HCT116 (cell line): ENCODE measurements at regions of chr1 and their contacts with region 1.

Region 1: GRCh38 chr1:152459596-152460528 is 45.8 kb upstream of the CRNN start:
- DNase-seq: peak; percentile 64
- ATAC-seq: peak; percentile 80
- H3K4me3 ChIP-seq: no peak overlapping the region
- H3K27ac ChIP-seq: no peak overlapping the region
- H3K4me1 ChIP-seq: peaks cover 0 to 11% of the 10 kb centered on the region in 2 experiments; a peak in 2 of 4 replicates
- H3K27me3 ChIP-seq: no peaks in the 10 kb centered on the region
- CTCF ChIP-seq: peak; percentile 39 to 88 (median 88); a peak in 4 of 6 replicates
- POLR2A ChIP-seq: no peak
- RAD21 ChIP-seq: no peak; the same call in 1 of the 2 replicates

Region 2: DNA sequence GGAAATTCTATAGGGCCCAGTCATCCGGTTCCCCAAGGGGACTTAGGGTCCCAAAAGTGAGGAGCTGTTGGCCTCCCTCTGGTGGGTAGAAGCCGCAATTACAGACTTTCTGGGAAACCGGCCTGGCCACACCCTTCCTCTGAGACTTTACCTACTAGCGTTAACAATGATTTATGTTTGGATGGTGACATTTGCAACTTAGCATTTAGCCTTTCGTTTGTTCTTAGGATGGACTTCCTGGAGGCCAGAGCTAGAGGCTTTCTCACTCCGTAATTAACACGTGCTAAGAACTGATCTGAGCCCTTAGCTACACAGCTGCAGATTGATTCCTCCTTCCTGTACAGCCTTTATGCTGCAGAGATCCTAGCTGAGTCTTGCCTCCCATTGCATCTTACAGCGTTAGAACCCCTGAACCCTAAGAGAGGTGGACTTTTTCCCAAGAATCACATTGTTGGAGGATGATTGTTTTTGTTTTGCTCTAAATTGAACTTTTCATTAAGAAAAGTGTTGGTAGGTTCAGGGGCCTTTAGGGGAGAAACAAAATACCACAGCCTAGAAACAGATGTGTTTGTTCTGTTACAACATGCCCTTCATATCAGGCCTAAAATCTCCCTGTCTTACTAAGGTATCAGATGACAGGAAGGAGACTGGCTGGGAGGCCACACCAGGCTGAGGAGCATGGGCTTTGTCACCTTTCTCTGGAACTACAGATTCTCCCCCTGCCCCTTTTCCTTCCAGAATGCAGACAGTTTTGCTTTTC is 425.0 kb before region 1 on chr1:
- CTCF ChIA-PET with region 1: interaction called, 17 read pairs
- POLR2A ChIA-PET with region 1: no interaction called
- RAD21 ChIA-PET with region 1: no interaction called
- intact Hi-C with region 1: no loop called
- DNase-seq: peak; percentile 79
- ATAC-seq: peak; percentile 62
- H3K4me3 ChIP-seq: peak overlapping the region; percentile 64 to 70
- H3K27ac ChIP-seq: peak overlapping the region; percentile 79
- H3K4me1 ChIP-seq: peaks cover 19 to 28% of the 10 kb centered on the region in 2 experiments
- H3K27me3 ChIP-seq: no peaks in the 10 kb centered on the region
- CTCF ChIP-seq: peak; percentile 52 to 79 (median 78); a peak in 5 of 6 replicates
- POLR2A ChIP-seq: no peak
- RAD21 ChIP-seq: peak; percentile 53

Region 3: DNA sequence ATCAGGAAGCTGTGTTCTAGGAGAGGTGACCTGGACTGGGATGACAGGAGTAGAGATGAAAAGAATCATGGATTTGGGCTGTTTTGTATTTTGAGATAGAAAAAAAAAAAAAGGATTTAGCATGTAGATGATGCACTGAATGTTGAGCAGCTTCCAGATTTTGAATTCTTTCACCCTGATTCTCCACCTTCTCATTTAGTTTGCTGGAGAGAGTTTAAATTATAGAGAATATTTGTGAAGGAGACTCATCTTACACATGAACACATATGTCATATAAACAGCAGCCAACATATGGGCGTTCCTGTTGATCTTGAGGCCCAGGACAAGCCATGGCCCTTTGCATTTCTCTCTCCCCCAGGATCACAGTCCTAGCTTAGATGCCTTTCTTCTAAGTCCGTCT is 308.2 kb before region 1 on chr1:
- CTCF ChIA-PET with region 1: interaction called, 11 read pairs
- POLR2A ChIA-PET with region 1: no interaction called
- RAD21 ChIA-PET with region 1: no interaction called
- intact Hi-C with region 1: no loop called
- DNase-seq: no peak
- ATAC-seq: no peak
- H3K4me3 ChIP-seq: no peak overlapping the region
- H3K27ac ChIP-seq: no peak overlapping the region
- H3K4me1 ChIP-seq: no peaks in the 10 kb centered on the region
- H3K27me3 ChIP-seq: no peaks in the 10 kb centered on the region
- CTCF ChIP-seq: no peak
- POLR2A ChIP-seq: no peak
- RAD21 ChIP-seq: no peak

Region 4: GRCh38 chr1:152347116-152347728 is 112.6 kb before region 1 on chr1:
- CTCF ChIA-PET with region 1: interaction called, 39 read pairs
- POLR2A ChIA-PET with region 1: interaction called, 4 read pairs
- RAD21 ChIA-PET with region 1: interaction called in 1 of 2 experiments, 5 read pairs
- intact Hi-C with region 1: no loop called
- DNase-seq: peak; percentile 61
- ATAC-seq: peak; percentile 81
- H3K4me3 ChIP-seq: no peak overlapping the region
- H3K27ac ChIP-seq: no peak overlapping the region
- H3K4me1 ChIP-seq: no peaks in the 10 kb centered on the region
- H3K27me3 ChIP-seq: peaks cover 23% of the 10 kb centered on the region
- CTCF ChIP-seq: peak; percentile 54 to 90 (median 81); a peak in 5 of 6 replicates
- POLR2A ChIP-seq: no peak
- RAD21 ChIP-seq: peak; percentile 57

Region 5: GRCh38 chr1:152473887-152474537 is 14.2 kb after region 1 on chr1:
- CTCF ChIA-PET with region 1: interaction called, 11 read pairs
- POLR2A ChIA-PET with region 1: no interaction called
- RAD21 ChIA-PET with region 1: no interaction called
- intact Hi-C with region 1: no loop called
- DNase-seq: no peak
- ATAC-seq: no peak
- H3K4me3 ChIP-seq: no peak overlapping the region
- H3K27ac ChIP-seq: no peak overlapping the region
- H3K4me1 ChIP-seq: no peaks in the 10 kb centered on the region
- H3K27me3 ChIP-seq: no peaks in the 10 kb centered on the region
- CTCF ChIP-seq: no peak
- POLR2A ChIP-seq: no peak
- RAD21 ChIP-seq: no peak

Region 6: GRCh38 chr1:152533327-152533938 is 73.6 kb after region 1 on chr1:
- CTCF ChIA-PET with region 1: interaction called, 6 read pairs
- POLR2A ChIA-PET with region 1: no interaction called
- RAD21 ChIA-PET with region 1: no interaction called
- intact Hi-C with region 1: loop called (anchors 2 kb)
- DNase-seq: peak; percentile 56
- ATAC-seq: peak; percentile 87
- H3K4me3 ChIP-seq: no peak overlapping the region
- H3K27ac ChIP-seq: no peak overlapping the region
- H3K4me1 ChIP-seq: no peaks in the 10 kb centered on the region
- H3K27me3 ChIP-seq: no peaks in the 10 kb centered on the region
- CTCF ChIP-seq: peak; percentile 86 to 91 (median 88)
- POLR2A ChIP-seq: no peak
- RAD21 ChIP-seq: peak; percentile 84

Region 7: GRCh38 chr1:152735648-152736047 is 275.8 kb after region 1 on chr1:
- CTCF ChIA-PET with region 1: no interaction called
- POLR2A ChIA-PET with region 1: no interaction called
- RAD21 ChIA-PET with region 1: no interaction called
- intact Hi-C with region 1: no loop called
- DNase-seq: no peak
- ATAC-seq: peak; percentile 83
- H3K4me3 ChIP-seq: no peak overlapping the region
- H3K27ac ChIP-seq: no peak overlapping the region
- H3K4me1 ChIP-seq: no peaks in the 10 kb centered on the region
- H3K27me3 ChIP-seq: peaks cover 39% of the 10 kb centered on the region
- CTCF ChIP-seq: peak; percentile 18 to 66 (median 62); a peak in 4 of 6 replicates
- POLR2A ChIP-seq: no peak
- RAD21 ChIP-seq: peak; percentile 47

Region 8: DNA sequence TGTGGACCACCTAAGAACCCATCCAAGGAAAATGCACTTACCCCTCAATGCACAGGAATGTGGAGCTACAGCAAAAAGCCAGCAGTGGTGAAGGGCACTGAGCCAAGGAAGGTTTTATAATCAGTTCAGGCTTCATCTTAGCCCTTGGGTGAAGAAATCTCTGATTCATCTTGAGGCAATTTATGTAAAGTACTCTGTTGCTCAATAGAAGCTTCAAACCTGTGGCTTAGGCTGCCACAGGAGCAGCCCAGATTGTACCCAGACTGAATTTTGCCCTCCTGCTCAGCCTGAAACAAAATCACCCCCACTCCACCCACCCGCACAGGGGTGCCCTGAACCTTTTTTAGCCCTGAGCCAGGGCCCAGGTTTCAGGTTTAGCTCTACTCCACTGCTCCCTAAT is 915.6 kb after region 1 on chr1 and contains the start of gene S100A12:
- CTCF ChIA-PET with region 1: no interaction called
- POLR2A ChIA-PET with region 1: no interaction called
- RAD21 ChIA-PET with region 1: no interaction called
- intact Hi-C with region 1: no loop called
- DNase-seq: no peak
- ATAC-seq: no peak
- H3K4me3 ChIP-seq: no peak within 1 kb of the TSS
- H3K27ac ChIP-seq: no peak within 1 kb of the TSS
- H3K4me1 ChIP-seq: no peaks in the 10 kb centered on the region
- H3K27me3 ChIP-seq: peaks cover 45% of the 10 kb centered on the region
- CTCF ChIP-seq: no peak
- POLR2A ChIP-seq: no peak
- RAD21 ChIP-seq: no peak
- total RNA-seq, gene S100A12: not detected